A549 (cell line): ENCODE measurements at regions of chr7 and their contacts with region 1.

Region 1: GRCh38 chr7:77536413-77537135 is 521 bp upstream of the PTPN12 start:
- DNase-seq: peak; percentile 95 to 98
- ATAC-seq: peak; percentile 82 to 90
- H3K4me3 ChIP-seq: peak overlapping the region; percentile 96
- H3K27ac ChIP-seq: peak overlapping the region; percentile 100
- H3K4me1 ChIP-seq: peaks cover 21% of the 10 kb centered on the region
- CTCF ChIP-seq: no peak
- EP300 ChIP-seq: no peak
- POLR2A ChIP-seq: peak; percentile 95
- RAD21 ChIP-seq: no peak; a peak in 1 of 5 replicates

Region 2: GRCh38 chr7:77351539-77352004 is 185.0 kb before region 1 on chr7:
- CTCF ChIA-PET with region 1: no interaction called
- POLR2A ChIA-PET with region 1: no interaction called
- DNase-seq: no peak
- ATAC-seq: no peak
- H3K4me3 ChIP-seq: no peak overlapping the region
- H3K27ac ChIP-seq: no peak overlapping the region
- H3K4me1 ChIP-seq: peaks cover 14% of the 10 kb centered on the region; the same call in 1 of the 3 replicates
- CTCF ChIP-seq: no peak
- EP300 ChIP-seq: no peak
- POLR2A ChIP-seq: no peak
- RAD21 ChIP-seq: no peak

Region 3: DNA sequence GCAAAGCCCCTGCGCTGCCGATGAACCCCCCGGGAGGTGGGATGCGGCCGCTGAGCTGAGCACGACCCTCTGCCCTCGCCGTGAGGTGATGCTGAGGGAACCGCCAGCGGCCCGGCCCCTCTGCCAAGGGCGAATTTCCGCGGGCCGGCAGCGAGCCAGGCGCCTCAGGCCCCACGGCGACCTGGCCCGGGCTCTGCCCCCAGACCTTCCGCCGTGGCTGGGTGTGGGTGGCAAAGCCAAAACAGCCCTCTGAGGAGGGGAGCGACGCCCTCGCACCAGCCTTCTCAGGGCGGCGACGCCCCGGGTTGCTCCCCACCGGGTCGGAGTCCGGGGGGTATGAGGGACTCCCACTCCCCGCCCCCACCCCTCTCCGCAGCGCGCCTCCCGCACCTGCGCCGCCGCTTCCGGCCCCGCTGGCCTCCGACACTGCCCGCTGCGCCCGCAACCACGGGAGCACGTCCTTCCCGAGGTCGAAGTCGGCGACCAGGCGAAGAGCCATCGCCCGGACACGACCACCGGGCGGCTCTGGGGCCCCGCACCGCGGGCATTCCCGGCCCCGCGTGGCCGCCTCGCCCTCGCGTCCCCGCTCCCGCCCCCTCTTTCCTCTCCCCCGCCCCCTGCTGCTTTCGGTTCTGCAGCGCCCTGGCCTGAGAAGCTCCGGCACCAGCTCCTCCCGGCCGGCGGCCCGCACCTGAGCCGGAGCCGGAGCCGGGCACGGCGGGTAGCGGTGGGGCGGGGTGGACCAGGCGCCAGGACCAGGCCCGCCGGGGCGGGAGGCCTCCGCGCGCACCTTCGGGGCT is 120.6 kb before region 1 on chr7 and contains the start of gene GSAP:
- CTCF ChIA-PET with region 1: no interaction called
- POLR2A ChIA-PET with region 1: interaction called, 21 read pairs
- DNase-seq: peak; percentile 31 to 65
- ATAC-seq: peak; percentile 81 to 82
- H3K4me3 ChIP-seq: peak within 1 kb of the TSS; percentile 65
- H3K27ac ChIP-seq: peak within 1 kb of the TSS; percentile 96
- H3K4me1 ChIP-seq: peaks cover 53% of the 10 kb centered on the region
- CTCF ChIP-seq: no peak
- EP300 ChIP-seq: 0 out of 5 replicates have a peak, but pooled peaks of 1 of the 2 experiments have one; percentile 19
- POLR2A ChIP-seq: peak; percentile 34
- RAD21 ChIP-seq: no peak; a peak in 1 of 5 replicates
- polyA plus RNA-seq, gene GSAP: 18.6 and 22.6 TPM in 2 replicates

Region 4: GRCh38 chr7:77425101-77426051 is 111.2 kb before region 1 on chr7:
- CTCF ChIA-PET with region 1: interaction called, 3 read pairs
- POLR2A ChIA-PET with region 1: interaction called, 15 read pairs
- DNase-seq: peak; percentile 53
- ATAC-seq: peak; percentile 81 to 83
- H3K4me3 ChIP-seq: peak overlapping the region; percentile 16; the same call in 2 of the 3 replicates
- H3K27ac ChIP-seq: peak overlapping the region; percentile 70 to 81
- H3K4me1 ChIP-seq: peaks cover 37% of the 10 kb centered on the region
- CTCF ChIP-seq: no peak
- EP300 ChIP-seq: no peak
- POLR2A ChIP-seq: no peak
- RAD21 ChIP-seq: no peak

Region 5: DNA sequence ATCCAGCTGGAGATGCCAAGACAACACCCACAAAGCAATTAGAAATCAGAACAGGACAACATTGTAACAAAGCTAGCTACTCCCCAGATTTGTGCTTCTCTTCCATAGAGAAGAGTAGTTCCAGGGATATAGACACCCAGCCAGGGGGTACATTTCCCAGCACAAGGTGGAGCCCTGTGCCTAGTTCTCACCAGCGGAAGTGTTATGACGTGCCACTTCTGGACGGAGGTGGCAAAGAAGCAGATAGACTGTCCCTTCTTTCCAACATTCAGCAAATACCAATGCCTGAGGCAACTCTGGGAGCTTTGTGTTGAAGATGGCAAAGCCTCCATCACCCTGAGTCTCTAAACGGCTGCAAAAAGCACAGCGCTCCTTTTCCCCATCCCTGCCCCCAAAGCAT is 97.0 kb before region 1 on chr7:
- CTCF ChIA-PET with region 1: interaction called, 11 read pairs
- POLR2A ChIA-PET with region 1: interaction called, 5 read pairs
- DNase-seq: peak; percentile 51 to 78
- ATAC-seq: peak; percentile 99
- H3K4me3 ChIP-seq: no peak overlapping the region
- H3K27ac ChIP-seq: peak overlapping the region; percentile 72 to 84
- H3K4me1 ChIP-seq: peaks cover 48% of the 10 kb centered on the region
- CTCF ChIP-seq: peak; percentile 82
- EP300 ChIP-seq: no peak
- POLR2A ChIP-seq: no peak
- RAD21 ChIP-seq: peak; percentile 92 to 95

Region 6: DNA sequence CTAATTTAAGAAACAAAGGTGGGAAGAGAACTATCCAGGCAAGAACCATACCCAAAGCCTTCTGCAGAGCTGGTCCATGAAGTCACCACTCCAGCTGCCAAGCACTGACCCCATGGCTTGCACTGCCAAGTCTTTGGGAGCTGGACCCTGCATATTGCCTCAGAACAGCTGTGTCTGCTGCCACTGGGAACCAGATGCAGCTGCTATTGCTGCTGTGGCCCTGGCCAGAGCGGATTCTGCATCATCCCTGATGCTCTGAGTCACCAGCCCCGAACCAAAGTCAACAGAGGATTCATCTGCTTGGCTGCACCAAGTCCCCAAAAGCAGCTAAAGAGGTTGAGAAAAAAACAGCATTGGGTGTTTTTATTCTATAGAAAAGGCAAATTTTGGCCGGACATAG is 81.2 kb before region 1 on chr7:
- CTCF ChIA-PET with region 1: interaction called, 4 read pairs
- POLR2A ChIA-PET with region 1: interaction called, 11 read pairs
- DNase-seq: peak; percentile 68 to 82
- ATAC-seq: peak; percentile 89 to 96
- H3K4me3 ChIP-seq: peak overlapping the region; percentile 8; the same call in 1 of the 3 replicates
- H3K27ac ChIP-seq: peak overlapping the region; percentile 73 to 83
- H3K4me1 ChIP-seq: peaks cover 78% of the 10 kb centered on the region
- CTCF ChIP-seq: no peak
- EP300 ChIP-seq: no peak; a peak in 1 of 5 replicates
- POLR2A ChIP-seq: no peak
- RAD21 ChIP-seq: 0 out of 5 replicates have a peak, but pooled peaks of 1 of the 2 experiments have one; percentile 31

Region 7: GRCh38 chr7:77479536-77480088 is 57.0 kb before region 1 on chr7:
- CTCF ChIA-PET with region 1: no interaction called
- POLR2A ChIA-PET with region 1: interaction called, 22 read pairs
- DNase-seq: peak; percentile 33 to 93
- ATAC-seq: peak; percentile 93 to 98
- H3K4me3 ChIP-seq: no peak overlapping the region; the same call in 2 of the 3 replicates
- H3K27ac ChIP-seq: peak overlapping the region; percentile 85 to 93
- H3K4me1 ChIP-seq: peaks cover 66% of the 10 kb centered on the region
- CTCF ChIP-seq: no peak
- EP300 ChIP-seq: peak; percentile 92 to 93; a peak in 4 of 5 replicates
- POLR2A ChIP-seq: no peak
- RAD21 ChIP-seq: peak in 1 of 2 experiments; percentile 60; a peak in 3 of 5 replicates